Activated CD4-positive, alpha-beta T cell treated with anti-CD3 and anti-CD28 coated beads for 36 hours (primary cell): ENCODE measurements at regions of chr10 and their contacts with region 1.

Region 1: GRCh38 chr10:31875608-31876007 is 53.0 kb downstream of the ARHGAP12 start:
- DNase-seq: peak; percentile 28
- ATAC-seq: peak; percentile 65
- H3K4me3 Mint-ChIP-seq: no peak overlapping the region
- H3K27ac Mint-ChIP-seq: no peak overlapping the region
- H3K4me1 Mint-ChIP-seq: peaks cover 35% of the 10 kb centered on the region
- H3K27me3 Mint-ChIP-seq: no peaks in the 10 kb centered on the region

Region 2: GRCh38 chr10:31146491-31147209 is 729.0 kb before region 1 on chr10:
- CTCF ChIA-PET with region 1: no interaction called
- POLR2A ChIA-PET with region 1: no interaction called
- intact Hi-C with region 1: no loop called
- DNase-seq: peak; percentile 45
- ATAC-seq: peak; percentile 73
- H3K4me3 Mint-ChIP-seq: peak overlapping the region; percentile 28
- H3K27ac Mint-ChIP-seq: peak overlapping the region; percentile 74
- H3K4me1 Mint-ChIP-seq: peaks cover 18% of the 10 kb centered on the region
- H3K27me3 Mint-ChIP-seq: no peaks in the 10 kb centered on the region

Region 3: GRCh38 chr10:31921031-31921430 is 45.4 kb after region 1 on chr10:
- CTCF ChIA-PET with region 1: no interaction called
- POLR2A ChIA-PET with region 1: no interaction called
- intact Hi-C with region 1: loop called (anchors 1 to 2 kb)
- DNase-seq: peak; percentile 32
- ATAC-seq: peak; percentile 75
- H3K4me3 Mint-ChIP-seq: peak overlapping the region; percentile 59
- H3K27ac Mint-ChIP-seq: peak overlapping the region; percentile 88
- H3K4me1 Mint-ChIP-seq: peaks cover 73% of the 10 kb centered on the region
- H3K27me3 Mint-ChIP-seq: no peaks in the 10 kb centered on the region

Region 4: GRCh38 chr10:32393911-32394310 is 518.3 kb after region 1 on chr10:
- CTCF ChIA-PET with region 1: no interaction called
- POLR2A ChIA-PET with region 1: no interaction called
- intact Hi-C with region 1: no loop called
- DNase-seq: no peak
- ATAC-seq: no peak
- H3K4me3 Mint-ChIP-seq: no peak overlapping the region
- H3K27ac Mint-ChIP-seq: no peak overlapping the region
- H3K4me1 Mint-ChIP-seq: peaks cover 1% of the 10 kb centered on the region
- H3K27me3 Mint-ChIP-seq: no peaks in the 10 kb centered on the region